ENCODE measurements at regions of chr9 and their contacts with region 1.

Region 1: DNA sequence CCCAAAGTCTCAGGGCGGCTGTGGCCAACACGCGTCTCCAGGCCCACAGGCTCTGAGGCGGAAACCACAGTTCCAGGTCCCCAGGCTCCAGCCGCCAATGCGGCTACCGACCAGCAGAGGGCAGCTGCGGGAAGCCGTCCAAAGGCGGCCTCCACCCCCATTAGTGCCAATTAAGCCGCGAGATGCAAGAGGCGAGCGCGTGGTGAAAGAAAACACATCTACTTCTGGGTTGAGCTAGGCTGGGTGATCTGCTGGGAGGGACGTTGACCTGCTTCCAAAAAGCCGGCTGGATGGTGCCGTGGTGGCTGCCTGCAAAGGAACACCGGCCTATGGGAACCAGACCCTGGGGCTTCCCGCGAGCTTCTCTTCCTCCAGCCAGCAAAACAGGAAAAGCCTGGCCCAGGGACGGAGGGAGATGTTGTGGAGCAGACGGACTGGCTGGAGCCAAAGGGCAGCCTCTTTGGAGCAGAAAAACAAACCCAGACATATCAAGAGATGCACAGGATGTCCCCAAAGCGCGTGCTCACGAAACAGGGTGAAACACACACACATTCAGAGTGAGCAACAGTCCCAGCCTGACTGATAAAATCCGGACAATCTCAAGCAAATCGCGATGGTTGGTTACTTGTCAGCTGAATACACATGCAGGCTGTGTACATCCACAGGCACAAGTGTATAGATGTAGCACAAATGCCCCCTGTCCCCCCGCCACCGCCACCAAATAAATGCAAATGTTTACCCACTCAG is 187.1 kb upstream of the BRINP1 start:
- DNase-seq: peak; percentile 81 to 92 (median 85)
- H3K4me3 ChIP-seq: peak overlapping the region; percentile 28 to 59 (median 53)
- H3K27ac ChIP-seq: no peak overlapping the region
- H3K4me1 ChIP-seq: peaks cover 0 to 5% (median 0%) of the 10 kb centered on the region in 3 donors
- H3K27me3 ChIP-seq: no peaks in the 10 kb centered on the region
- CTCF ChIP-seq: peak; percentile 89

Region 2: GRCh38 chr9:119601632-119602031 is 45.3 kb after region 1 on chr9:
- intact Hi-C with region 1: no loop called
- DNase-seq: no peak
- H3K4me3 ChIP-seq: no peak overlapping the region
- H3K27ac ChIP-seq: no peak overlapping the region
- H3K4me1 ChIP-seq: no peaks in the 10 kb centered on the region
- H3K27me3 ChIP-seq: no peaks in the 10 kb centered on the region
- CTCF ChIP-seq: no peak

Region 3: DNA sequence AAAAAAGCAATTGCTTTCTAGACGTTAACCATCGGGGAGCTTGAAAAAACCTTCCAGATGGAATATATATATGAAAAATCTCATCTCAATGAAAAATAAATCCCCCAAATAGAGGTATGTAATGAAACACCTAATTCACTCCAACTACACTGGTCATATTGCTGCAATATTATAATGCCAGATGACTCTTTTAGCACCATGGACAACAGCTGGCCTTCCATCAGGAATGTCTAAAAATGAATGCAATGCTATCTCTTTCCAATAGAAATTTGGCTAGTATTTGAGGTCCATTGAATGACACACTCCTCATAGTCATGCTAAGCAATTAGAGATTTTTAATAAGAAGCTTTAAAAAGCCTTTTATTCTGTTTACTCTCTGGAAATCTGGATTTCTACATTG is 153.1 kb after region 1 on chr9:
- intact Hi-C with region 1: no loop called
- DNase-seq: no peak
- H3K4me3 ChIP-seq: no peak overlapping the region
- H3K27ac ChIP-seq: no peak overlapping the region
- H3K4me1 ChIP-seq: no peaks in the 10 kb centered on the region
- H3K27me3 ChIP-seq: no peaks in the 10 kb centered on the region
- CTCF ChIP-seq: no peak

Region 4: GRCh38 chr9:119968836-119969707 is 412.8 kb after region 1 on chr9:
- intact Hi-C with region 1: loop called (anchors 10 kb)
- DNase-seq: peak; percentile 73 to 91 (median 80)
- H3K4me3 ChIP-seq: no peak overlapping the region
- H3K27ac ChIP-seq: no peak overlapping the region
- H3K4me1 ChIP-seq: peaks cover 0 to 9% (median 5%) of the 10 kb centered on the region in 3 donors
- H3K27me3 ChIP-seq: no peaks in the 10 kb centered on the region
- CTCF ChIP-seq: peak; percentile 89